Activated CD4-positive, alpha-beta T cell treated with anti-CD3 and anti-CD28 coated beads for 36 hours (primary cell): ENCODE measurements at regions of chr4 and their contacts with region 1.

Region 1: DNA sequence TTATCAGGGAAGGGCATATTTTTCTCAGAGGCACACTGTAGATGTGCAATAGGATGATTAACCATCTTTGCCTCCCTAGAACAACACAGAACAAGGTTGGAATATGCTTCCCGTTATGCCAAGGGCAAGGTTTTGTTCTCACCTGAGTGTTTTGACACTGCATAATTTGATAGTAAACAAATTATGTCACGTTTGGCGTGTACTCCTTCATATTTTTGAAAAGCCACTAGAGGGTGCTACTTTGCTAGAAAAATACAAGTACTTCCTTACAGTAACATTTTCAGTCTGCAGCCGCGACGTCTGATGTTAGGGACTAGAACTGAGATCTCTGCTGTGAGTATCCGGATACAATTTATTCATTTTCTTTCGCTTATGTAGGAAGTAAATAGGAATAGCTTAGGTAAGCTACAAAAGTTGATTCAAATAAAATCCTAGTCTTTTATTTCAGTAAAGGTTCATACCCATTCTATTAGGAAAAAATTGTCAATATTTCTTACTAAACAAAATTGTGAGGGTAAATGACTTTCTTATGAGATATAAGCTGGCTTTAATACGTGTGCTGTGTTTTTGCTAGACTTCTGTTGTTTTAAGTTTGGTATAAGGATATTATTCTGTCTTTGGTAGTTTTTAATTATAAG is 181.1 kb upstream of the WDFY3 start:
- DNase-seq: peak; percentile 25
- ATAC-seq: peak; percentile 63
- H3K4me3 Mint-ChIP-seq: no peak overlapping the region
- H3K27ac Mint-ChIP-seq: no peak overlapping the region
- H3K4me1 Mint-ChIP-seq: no peaks in the 10 kb centered on the region
- H3K27me3 Mint-ChIP-seq: peaks cover 5% of the 10 kb centered on the region

Region 2: DNA sequence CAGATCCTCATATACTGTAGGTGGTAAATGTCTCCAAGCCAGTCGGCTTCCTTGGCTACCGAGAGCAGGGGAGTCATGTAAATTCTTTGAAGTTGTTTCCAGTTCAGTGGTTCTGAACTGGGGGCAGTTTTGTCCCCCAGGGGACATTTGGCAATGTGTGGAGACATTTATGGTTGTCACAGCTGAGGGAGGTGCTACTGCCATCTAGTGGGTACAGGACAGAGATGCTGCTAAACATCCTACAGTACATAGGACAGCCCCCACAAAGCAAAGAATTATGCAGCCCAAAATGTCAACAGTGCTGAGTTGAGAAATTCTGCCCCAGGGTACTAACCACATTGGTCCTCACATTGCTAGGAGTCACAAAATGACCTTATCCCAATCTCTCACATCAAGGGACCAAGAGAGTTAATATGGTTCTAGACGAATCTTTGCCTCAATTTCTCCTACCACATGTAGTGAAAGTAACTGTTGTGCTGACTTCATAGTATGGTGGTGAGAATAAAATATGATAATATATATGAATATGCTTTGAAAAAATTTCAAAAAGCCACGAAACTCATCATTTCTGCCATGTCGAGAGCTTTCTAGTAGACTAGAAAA is 223.0 kb after region 1 on chr4:
- CTCF ChIA-PET with region 1: interaction called, 3 read pairs
- POLR2A ChIA-PET with region 1: no interaction called
- intact Hi-C with region 1: loop called (anchors 1 to 5 kb)
- DNase-seq: peak; percentile 31
- ATAC-seq: no peak
- H3K4me3 Mint-ChIP-seq: no peak overlapping the region
- H3K27ac Mint-ChIP-seq: no peak overlapping the region
- H3K4me1 Mint-ChIP-seq: no peaks in the 10 kb centered on the region
- H3K27me3 Mint-ChIP-seq: peaks cover 2% of the 10 kb centered on the region

Region 3: GRCh38 chr4:85747882-85748491 is 600.4 kb after region 1 on chr4:
- CTCF ChIA-PET with region 1: interaction called, 7 read pairs
- POLR2A ChIA-PET with region 1: no interaction called
- intact Hi-C with region 1: loop called (anchors 1 kb)
- DNase-seq: peak; percentile 14
- ATAC-seq: no peak
- H3K4me3 Mint-ChIP-seq: no peak overlapping the region
- H3K27ac Mint-ChIP-seq: no peak overlapping the region
- H3K4me1 Mint-ChIP-seq: no peaks in the 10 kb centered on the region
- H3K27me3 Mint-ChIP-seq: no peaks in the 10 kb centered on the region

Region 4: GRCh38 chr4:85798012-85798770 is 650.6 kb after region 1 on chr4:
- CTCF ChIA-PET with region 1: interaction called, 5 read pairs
- POLR2A ChIA-PET with region 1: no interaction called
- intact Hi-C with region 1: loop called in 1 of 2 experiments (anchors 5 kb)
- DNase-seq: no peak
- ATAC-seq: no peak
- H3K4me3 Mint-ChIP-seq: no peak overlapping the region
- H3K27ac Mint-ChIP-seq: no peak overlapping the region
- H3K4me1 Mint-ChIP-seq: no peaks in the 10 kb centered on the region
- H3K27me3 Mint-ChIP-seq: no peaks in the 10 kb centered on the region

Region 5: DNA sequence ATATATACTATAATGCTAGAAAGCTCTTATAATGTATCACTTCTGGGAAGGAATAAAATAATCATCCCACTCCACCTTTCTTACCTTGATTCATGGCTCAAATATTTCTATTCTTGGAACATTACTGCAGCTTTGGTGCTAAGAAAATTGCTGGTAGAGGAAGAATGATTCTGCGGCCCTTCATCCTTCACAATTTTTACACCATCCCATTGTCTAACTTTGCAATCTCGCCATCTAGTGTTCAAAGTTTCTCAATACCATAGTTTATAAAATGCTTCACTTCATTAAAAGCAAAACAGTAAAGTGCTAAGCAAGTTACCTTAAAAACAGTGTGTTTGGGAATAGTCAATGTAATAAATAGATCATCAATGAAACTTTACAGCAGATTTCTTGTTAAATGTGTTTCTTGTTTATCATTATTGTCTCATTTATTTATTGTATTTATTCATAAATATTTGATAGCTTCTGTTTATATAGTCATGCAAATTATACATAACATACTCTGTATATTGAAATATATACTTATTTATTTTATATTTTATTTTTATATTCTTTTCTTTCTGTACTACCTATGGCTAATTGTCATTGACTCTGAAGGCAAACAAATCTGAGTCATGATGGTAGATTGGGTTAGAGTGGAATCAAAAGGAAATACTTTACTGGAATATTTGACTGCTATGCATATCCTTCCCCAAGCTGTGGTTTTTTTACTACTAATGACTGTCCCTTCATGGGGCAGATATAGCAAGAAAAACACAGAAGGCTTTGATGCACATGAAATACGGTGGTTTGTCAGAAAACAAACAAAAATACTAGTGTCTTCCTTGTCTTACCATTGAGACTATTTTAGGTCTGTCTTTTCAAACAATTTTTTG is 821.6 kb after region 1 on chr4:
- CTCF ChIA-PET with region 1: interaction called, 4 read pairs
- POLR2A ChIA-PET with region 1: no interaction called
- intact Hi-C with region 1: loop called in 1 of 2 experiments (anchors 1 kb)
- DNase-seq: no peak
- ATAC-seq: no peak
- H3K4me3 Mint-ChIP-seq: no peak overlapping the region
- H3K27ac Mint-ChIP-seq: no peak overlapping the region
- H3K4me1 Mint-ChIP-seq: no peaks in the 10 kb centered on the region
- H3K27me3 Mint-ChIP-seq: peaks cover 2% of the 10 kb centered on the region

Region 6: GRCh38 chr4:86043755-86044592 is 896.4 kb after region 1 on chr4:
- CTCF ChIA-PET with region 1: no interaction called
- POLR2A ChIA-PET with region 1: no interaction called
- intact Hi-C with region 1: loop called (anchors 2 to 5 kb)
- DNase-seq: peak; percentile 7
- ATAC-seq: no peak
- H3K4me3 Mint-ChIP-seq: no peak overlapping the region
- H3K27ac Mint-ChIP-seq: no peak overlapping the region
- H3K4me1 Mint-ChIP-seq: no peaks in the 10 kb centered on the region
- H3K27me3 Mint-ChIP-seq: no peaks in the 10 kb centered on the region